ENCODE measurements at regions of chr11 and their contacts with region 1.

Region 1: DNA sequence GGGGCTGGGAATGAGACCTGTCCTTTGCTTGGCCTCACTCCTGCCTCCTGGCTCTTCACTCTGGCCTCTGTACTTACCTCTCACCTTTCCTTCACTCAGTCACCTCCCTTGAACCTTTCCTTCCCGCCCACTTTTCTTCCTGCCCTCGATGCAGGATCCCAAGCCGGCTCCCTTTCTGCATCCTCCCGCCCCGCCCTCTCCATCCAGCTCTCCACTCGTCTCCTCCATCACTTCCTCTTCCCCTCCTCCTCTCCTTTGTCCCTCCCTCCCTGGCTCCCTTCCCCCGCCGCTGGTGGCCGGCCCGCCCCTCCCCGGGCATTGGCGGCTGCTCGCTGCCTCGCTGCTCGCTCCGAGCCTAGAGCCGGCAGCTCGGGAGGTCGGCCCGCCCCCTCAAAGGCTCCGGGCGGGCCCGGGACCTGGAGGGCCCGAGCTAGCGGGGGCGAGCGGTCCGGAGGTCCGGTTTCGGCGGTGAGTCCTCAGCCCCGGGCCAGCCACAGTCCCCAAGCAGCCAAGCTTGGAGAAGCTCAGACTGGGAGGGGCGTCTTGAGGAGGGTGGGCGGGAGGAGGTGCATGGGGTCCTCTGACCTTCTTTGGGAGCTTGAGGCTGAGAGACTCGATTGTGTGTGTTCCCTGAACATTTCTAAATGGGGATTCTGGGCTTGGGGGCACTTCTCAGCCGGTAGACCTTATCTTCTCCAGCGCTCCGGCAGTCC is 13.8 kb downstream of the PHLDB1 start:
- DNase-seq: peak; percentile 82 to 91
- H3K4me3 ChIP-seq: peak overlapping the region; percentile 67
- H3K27ac ChIP-seq: peak overlapping the region; percentile 79
- H3K4me1 ChIP-seq: peaks cover 62% of the 10 kb centered on the region
- H3K27me3 ChIP-seq: no peaks in the 10 kb centered on the region
- CTCF ChIP-seq: no peak

Region 2: GRCh38 chr11:118607401-118608359 is 13.5 kb before region 1 on chr11 and contains the start of gene PHLDB1:
- CTCF ChIA-PET with region 1: interaction called, 12 read pairs
- POLR2A ChIA-PET with region 1: interaction called, 31 read pairs
- intact Hi-C with region 1: no loop called
- DNase-seq: peak in 1 of 2 experiments; percentile 61
- H3K4me3 ChIP-seq: peak within 1 kb of the TSS; percentile 70
- H3K27ac ChIP-seq: no peak within 1 kb of the TSS
- H3K4me1 ChIP-seq: peaks cover 6% of the 10 kb centered on the region; the same call in 1 of the 2 replicates
- H3K27me3 ChIP-seq: peaks cover 13% of the 10 kb centered on the region; the same call in 1 of the 2 replicates
- CTCF ChIP-seq: peak; percentile 63
- total RNA-seq, gene PHLDB1: 122 and 125 TPM in 2 replicates

Region 3: DNA sequence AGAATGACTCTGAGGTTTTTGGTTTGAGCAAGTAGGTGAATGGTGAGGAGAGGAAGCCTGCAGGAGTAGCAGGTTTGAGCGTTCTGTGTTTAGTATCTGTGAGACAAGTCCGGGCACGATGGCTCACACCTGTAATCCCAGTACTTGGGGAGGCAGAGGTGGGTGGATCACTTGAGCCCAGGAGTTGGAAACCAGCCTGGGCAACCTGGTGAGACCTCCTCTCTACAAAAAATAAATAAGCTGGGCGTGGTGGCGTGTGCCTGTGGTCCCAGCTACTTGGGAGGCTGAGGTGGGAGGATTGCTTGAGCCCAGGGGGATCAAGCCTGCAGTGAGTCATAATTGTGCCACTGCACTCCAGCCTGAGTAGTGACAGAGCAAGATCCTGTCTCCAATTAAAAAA is 367.1 kb after region 1 on chr11:
- CTCF ChIA-PET with region 1: no interaction called
- POLR2A ChIA-PET with region 1: interaction called, 12 read pairs
- intact Hi-C with region 1: no loop called
- DNase-seq: peak; percentile 60 to 73
- H3K4me3 ChIP-seq: peak overlapping the region; percentile 9; the same call in 1 of the 2 replicates
- H3K27ac ChIP-seq: peak overlapping the region; percentile 64
- H3K4me1 ChIP-seq: peaks cover 9% of the 10 kb centered on the region
- H3K27me3 ChIP-seq: no peaks in the 10 kb centered on the region
- CTCF ChIP-seq: no peak

Region 4: DNA sequence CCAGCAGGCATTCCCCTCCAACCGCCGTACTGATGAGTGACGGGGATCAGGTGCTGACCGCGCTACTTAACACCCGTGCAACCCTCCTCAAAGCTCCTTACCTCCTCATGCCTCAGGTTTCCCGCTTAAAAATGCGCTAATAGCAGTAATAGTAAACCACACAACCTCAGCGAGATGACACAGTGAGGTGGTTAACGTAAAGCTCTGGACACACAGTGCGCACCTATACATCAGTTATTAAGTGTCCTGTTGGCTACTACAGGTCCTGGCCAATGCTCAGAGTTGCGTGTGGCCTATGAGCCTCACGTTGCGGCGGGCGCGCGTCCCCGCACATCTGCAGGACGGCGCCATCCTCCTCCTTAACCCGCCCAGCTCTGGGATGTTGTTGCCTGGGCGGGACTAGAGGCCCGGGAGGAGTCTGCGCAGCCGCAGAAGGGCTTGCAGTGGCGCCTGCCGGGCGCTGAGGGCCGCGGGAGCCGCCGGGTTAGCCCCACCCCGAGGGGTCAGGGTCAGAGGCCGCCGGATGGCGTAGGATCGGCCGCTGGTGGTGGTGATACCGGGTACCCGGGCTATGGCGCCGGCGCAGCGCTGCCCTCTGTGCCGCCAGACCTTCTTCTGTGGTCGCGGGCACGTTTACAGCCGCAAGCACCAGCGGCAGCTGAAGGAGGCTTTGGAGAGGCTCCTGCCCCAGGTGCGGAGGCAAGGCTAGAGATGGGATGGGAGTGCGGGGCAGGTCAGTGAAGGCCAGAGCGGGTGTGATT is 376.6 kb after region 1 on chr11 and contains the start of gene CENATAC:
- CTCF ChIA-PET with region 1: no interaction called
- POLR2A ChIA-PET with region 1: interaction called, 10 read pairs
- intact Hi-C with region 1: no loop called
- DNase-seq: peak; percentile 82 to 89
- H3K4me3 ChIP-seq: peak within 1 kb of the TSS; percentile 86
- H3K27ac ChIP-seq: peak within 1 kb of the TSS; percentile 74
- H3K4me1 ChIP-seq: peaks cover 33% of the 10 kb centered on the region
- H3K27me3 ChIP-seq: no peaks in the 10 kb centered on the region
- CTCF ChIP-seq: no peak
- total RNA-seq, gene CENATAC: 61.7 and 73.9 TPM in 2 replicates

Region 5: DNA sequence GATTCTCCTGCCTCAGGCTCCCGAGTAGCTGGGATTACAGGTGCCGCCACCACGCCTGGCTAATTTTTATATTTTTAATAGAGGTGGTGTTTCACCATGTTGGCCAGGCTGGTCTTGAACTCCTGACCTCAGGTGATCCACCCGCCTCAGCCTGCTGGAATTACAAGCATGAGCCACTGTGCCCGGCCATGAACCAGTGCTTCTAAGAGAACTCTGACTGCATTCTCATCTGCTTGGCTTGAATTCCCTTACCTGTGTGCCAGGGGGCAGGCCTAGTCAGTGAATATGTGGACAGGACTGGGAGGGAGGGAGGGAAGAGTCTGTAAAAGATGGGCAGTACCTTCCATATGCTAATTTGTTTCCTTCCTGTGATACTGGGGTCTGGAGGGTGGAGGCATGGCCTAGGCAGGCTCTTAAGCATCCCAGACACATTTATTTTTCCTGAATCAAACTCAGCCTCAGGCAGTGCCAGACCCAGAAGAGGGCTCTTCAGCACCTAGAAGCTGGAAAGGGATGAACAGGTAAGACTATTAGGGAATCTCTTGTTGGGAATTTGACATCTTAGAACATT is 390.3 kb after region 1 on chr11:
- CTCF ChIA-PET with region 1: no interaction called
- POLR2A ChIA-PET with region 1: interaction called, 12 read pairs
- intact Hi-C with region 1: no loop called
- DNase-seq: no peak
- H3K4me3 ChIP-seq: no peak overlapping the region
- H3K27ac ChIP-seq: peak overlapping the region; percentile 22; the same call in 1 of the 2 replicates
- H3K4me1 ChIP-seq: peaks cover 13% of the 10 kb centered on the region
- H3K27me3 ChIP-seq: no peaks in the 10 kb centered on the region
- CTCF ChIP-seq: no peak

Region 6: GRCh38 chr11:119030329-119031049 is 409.3 kb after region 1 on chr11 and contains the start of gene SLC37A4:
- CTCF ChIA-PET with region 1: interaction called, 11 read pairs
- POLR2A ChIA-PET with region 1: no interaction called
- intact Hi-C with region 1: no loop called
- DNase-seq: peak; percentile 98 to 99
- H3K4me3 ChIP-seq: peak within 1 kb of the TSS; percentile 80
- H3K27ac ChIP-seq: no peak within 1 kb of the TSS
- H3K4me1 ChIP-seq: peaks cover 14% of the 10 kb centered on the region; the same call in 1 of the 2 replicates
- H3K27me3 ChIP-seq: no peaks in the 10 kb centered on the region
- CTCF ChIP-seq: peak; percentile 92; the same call in 1 of the 2 replicates
- total RNA-seq, gene SLC37A4: 23.2 and 24.3 TPM in 2 replicates

Measured in PC-9 (cell line).